Lower leg skin (tissue), 4 donors: ENCODE measurements at regions of chr3 and their contacts with region 1.

Region 1: GRCh38 chr3:100317912-100318311 is 16.6 kb upstream of the NIT2 start:
- DNase-seq: no peak
- H3K4me3 ChIP-seq: no peak overlapping the region
- CTCF ChIP-seq: no peak
- POLR2A ChIP-seq: no peak

Region 2: GRCh38 chr3:100254168-100254777 is 63.6 kb before region 1 on chr3:
- intact Hi-C with region 1: no loop called
- DNase-seq: peak in 1 of 2 donors; percentile 37
- H3K4me3 ChIP-seq: no peak overlapping the region
- CTCF ChIP-seq: no peak
- POLR2A ChIP-seq: no peak

Region 3: GRCh38 chr3:100297784-100298183 is 20.1 kb before region 1 on chr3:
- intact Hi-C with region 1: loop called (anchors 2 kb)
- DNase-seq: no peak
- H3K4me3 ChIP-seq: no peak overlapping the region
- CTCF ChIP-seq: no peak
- POLR2A ChIP-seq: no peak

Region 4: GRCh38 chr3:100603469-100603868 is 285.6 kb after region 1 on chr3:
- intact Hi-C with region 1: no loop called
- DNase-seq: no peak
- H3K4me3 ChIP-seq: no peak overlapping the region
- CTCF ChIP-seq: no peak
- POLR2A ChIP-seq: no peak